Natural killer cell (primary cell): ENCODE measurements at regions of chr15 and their contacts with region 1.

Region 1: DNA sequence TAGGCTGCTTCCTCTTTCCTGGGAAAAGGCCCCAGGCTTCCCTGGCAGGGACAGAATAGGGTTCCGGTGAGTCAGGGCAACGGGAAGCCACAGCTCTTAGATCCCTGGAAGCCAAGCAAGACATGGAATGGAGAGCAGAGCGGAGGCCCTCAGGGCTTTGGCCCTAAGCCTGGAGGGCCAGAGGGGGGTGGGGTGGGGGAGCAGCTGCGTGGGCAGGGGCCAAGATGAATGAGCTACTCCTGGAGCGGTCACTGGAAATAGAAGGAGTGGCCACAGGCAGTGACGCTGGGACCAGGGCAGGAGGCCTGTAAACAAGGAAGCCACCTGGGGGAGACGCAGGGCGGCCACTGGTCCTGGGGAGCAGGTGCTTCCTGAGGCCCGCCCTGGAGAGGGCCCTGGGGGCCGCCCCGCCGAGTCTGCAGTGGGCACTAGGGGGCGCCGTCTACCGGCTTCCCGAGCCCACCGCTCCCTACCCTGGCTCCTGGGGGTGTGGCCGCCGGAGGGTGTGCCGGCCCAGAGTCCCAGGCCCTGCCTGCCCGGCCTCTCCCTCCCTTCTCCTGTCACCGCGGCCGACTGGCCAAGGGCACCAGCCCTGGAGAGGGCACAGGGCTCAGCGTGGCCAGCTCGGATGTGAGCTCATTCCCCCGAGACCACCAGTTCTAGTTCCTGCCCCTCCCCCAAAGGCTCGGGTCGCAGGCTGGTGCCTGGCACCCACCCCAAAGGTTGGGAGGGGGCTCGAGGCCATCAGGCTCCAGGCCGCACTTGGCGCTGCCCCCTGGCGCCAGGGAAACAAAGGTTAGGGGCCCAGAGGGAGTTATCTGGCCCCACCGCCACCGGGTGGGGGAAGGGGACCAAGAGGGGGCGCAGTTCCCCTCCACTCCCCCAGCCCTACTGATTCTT is 12.1 kb downstream of the VPS18 start:
- DNase-seq: peak; percentile 68 to 83
- ATAC-seq: peak; percentile 55 to 67 (median 62)
- H3K4me3 ChIP-seq: peak overlapping the region; percentile 52
- H3K4me3 Mint-ChIP-seq: peak overlapping the region; percentile 85
- H3K27ac ChIP-seq: peak overlapping the region; percentile 84
- H3K27ac Mint-ChIP-seq: peak overlapping the region in 1 of 2 donors; percentile 91
- H3K4me1 ChIP-seq: peaks cover 42% of the 10 kb centered on the region
- H3K4me1 Mint-ChIP-seq: peaks cover 19 to 51% of the 10 kb centered on the region in 2 donors
- H3K27me3 ChIP-seq: no peaks in the 10 kb centered on the region
- H3K27me3 Mint-ChIP-seq: no peaks in the 10 kb centered on the region
- CTCF ChIP-seq: peak; percentile 83

Region 2: GRCh38 chr15:40430271-40430805 is 476.0 kb before region 1 on chr15:
- intact Hi-C with region 1: no loop called
- DNase-seq: no peak
- ATAC-seq: no peak
- H3K4me3 ChIP-seq: no peak overlapping the region
- H3K4me3 Mint-ChIP-seq: no peak overlapping the region
- H3K27ac ChIP-seq: no peak overlapping the region
- H3K27ac Mint-ChIP-seq: no peak overlapping the region
- H3K4me1 ChIP-seq: peaks cover 9% of the 10 kb centered on the region
- H3K4me1 Mint-ChIP-seq: peaks cover 6 to 7% of the 10 kb centered on the region in 2 donors
- H3K27me3 ChIP-seq: peaks cover 3% of the 10 kb centered on the region
- H3K27me3 Mint-ChIP-seq: peaks cover 0 to 3% of the 10 kb centered on the region in 2 donors
- CTCF ChIP-seq: no peak

Region 3: DNA sequence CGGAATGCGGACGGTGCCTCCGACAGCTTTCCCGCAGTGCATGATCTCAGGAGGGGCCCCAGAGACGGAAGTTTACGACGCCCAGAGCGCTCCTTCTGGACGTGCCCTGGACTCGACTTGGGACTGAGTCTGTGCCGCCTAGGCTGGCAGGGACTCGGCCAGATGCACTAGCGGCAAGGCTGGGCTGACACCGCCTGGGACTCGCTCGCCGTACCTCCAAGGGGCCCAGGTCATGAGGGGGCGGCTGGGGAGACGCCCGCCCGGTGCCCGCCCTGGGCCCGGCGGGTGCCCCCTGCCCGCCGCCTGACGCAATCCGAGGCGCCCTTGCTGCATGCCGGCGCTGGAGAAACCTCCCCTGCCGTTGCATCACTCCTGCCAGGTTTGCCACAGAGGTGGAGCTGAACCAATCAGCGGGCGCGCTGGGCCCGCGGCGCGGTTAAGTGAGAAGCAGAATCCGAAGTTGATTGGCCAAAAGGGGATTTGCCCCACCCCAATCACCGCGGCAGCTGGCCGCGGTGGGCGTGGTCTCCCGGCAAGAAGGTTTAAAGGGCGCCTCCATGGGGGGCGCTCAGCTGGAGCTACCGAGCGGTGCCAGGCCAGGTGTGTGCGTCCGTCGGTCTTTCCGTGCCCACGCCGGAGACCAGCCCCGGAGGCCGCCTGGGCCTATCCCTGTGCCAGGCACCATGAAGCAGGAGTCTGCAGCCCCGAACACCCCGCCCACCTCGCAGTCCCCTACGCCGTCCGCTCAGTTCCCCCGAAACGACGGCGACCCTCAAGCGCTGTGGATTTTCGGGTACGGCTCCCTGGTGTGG is 46.8 kb after region 1 on chr15 and contains the start of gene CHAC1:
- intact Hi-C with region 1: loop called (anchors 2 kb)
- DNase-seq: peak; percentile 83 to 97
- ATAC-seq: peak; percentile 93 to 97 (median 94)
- H3K4me3 ChIP-seq: peak within 1 kb of the TSS; percentile 56
- H3K4me3 Mint-ChIP-seq: peak within 1 kb of the TSS; percentile 87
- H3K27ac ChIP-seq: peak within 1 kb of the TSS; percentile 4
- H3K27ac Mint-ChIP-seq: peak within 1 kb of the TSS; percentile 48 to 86
- H3K4me1 ChIP-seq: peaks cover 18% of the 10 kb centered on the region
- H3K4me1 Mint-ChIP-seq: peaks cover 0 to 11% of the 10 kb centered on the region in 2 donors
- H3K27me3 ChIP-seq: no peaks in the 10 kb centered on the region
- H3K27me3 Mint-ChIP-seq: peaks cover 0 to 7% of the 10 kb centered on the region in 2 donors
- CTCF ChIP-seq: peak; percentile 11
- total RNA-seq, gene CHAC1: 1.1 to 1.7 TPM in 2 of 3 donors, not detected in the other

Region 4: GRCh38 chr15:41022487-41023090 is 116.2 kb after region 1 on chr15:
- intact Hi-C with region 1: loop called (anchors 1 kb)
- DNase-seq: peak in 1 of 2 donors; percentile 70
- ATAC-seq: peak; percentile 64 to 80 (median 67)
- H3K4me3 ChIP-seq: no peak overlapping the region
- H3K4me3 Mint-ChIP-seq: no peak overlapping the region
- H3K27ac ChIP-seq: no peak overlapping the region
- H3K27ac Mint-ChIP-seq: no peak overlapping the region
- H3K4me1 ChIP-seq: no peaks in the 10 kb centered on the region
- H3K4me1 Mint-ChIP-seq: peaks cover 0 to 3% of the 10 kb centered on the region in 2 donors
- H3K27me3 ChIP-seq: no peaks in the 10 kb centered on the region
- H3K27me3 Mint-ChIP-seq: no peaks in the 10 kb centered on the region
- CTCF ChIP-seq: peak; percentile 63